Colonic mucosa (tissue), 4 donors: ENCODE measurements at regions of chr4 and their contacts with region 1.

Region 1: DNA sequence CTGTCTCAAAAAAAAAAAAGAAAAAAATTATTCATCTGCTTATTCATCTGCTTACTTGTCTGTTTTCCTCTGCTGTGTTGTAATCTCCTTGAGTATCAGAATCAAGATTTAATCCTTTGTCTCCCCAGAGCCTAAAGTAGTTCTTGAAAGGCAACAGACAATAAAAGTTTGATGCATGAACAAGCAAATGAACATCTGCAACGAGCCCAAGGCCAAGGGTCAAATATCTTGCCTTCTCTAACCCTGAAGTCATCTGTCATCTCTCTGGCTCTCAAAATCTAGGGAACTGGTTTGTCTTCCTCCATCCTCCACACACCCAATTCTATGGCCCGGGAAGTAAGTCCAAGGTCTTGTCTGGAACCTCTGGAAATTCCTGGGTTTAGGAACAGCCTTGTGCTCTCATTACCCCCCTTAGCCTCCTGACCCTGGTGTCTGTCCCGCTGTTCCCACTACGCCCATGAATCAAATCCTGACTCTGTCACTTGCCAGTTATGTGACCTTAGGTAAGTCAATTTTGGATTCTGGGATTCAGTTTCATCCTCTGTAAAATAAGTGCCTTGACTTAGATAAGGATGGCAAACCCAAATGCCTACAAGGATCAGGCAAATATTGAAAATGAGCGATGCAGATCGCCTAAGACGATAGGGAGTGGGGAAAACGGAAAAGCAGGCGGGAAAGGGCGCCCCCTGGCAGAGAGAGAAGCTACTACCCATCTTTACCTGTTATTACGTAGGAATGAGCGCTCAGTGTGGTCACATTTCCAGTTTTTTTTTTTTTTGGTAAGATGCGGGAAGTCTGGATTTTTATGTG is 102.7 kb upstream of the DHX15 start:
- DNase-seq: peak; percentile 54
- H3K4me3 ChIP-seq: no peak overlapping the region
- H3K27ac ChIP-seq: no peak overlapping the region
- H3K4me1 ChIP-seq: no peaks in the 10 kb centered on the region
- H3K27me3 ChIP-seq: no peaks in the 10 kb centered on the region
- CTCF ChIP-seq: peak; percentile 56

Region 2: DNA sequence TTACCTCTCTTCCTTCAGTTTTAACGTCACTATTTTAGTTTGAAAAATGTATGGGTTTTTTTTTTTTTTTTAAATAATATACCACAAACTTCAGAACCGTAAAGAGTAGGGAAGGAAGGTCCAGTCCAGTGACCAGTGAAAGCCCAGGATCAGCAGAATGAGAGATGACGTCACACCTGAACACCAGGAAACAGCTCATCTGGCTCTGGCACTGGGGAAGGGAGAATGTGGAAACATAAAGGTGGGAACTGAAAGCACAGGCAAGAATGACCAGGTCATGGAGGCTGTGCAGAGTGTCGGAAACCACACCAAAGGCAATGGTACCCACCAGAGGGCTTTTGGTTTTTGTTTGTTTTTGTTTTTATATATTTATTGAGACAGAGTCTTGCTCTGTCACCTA is 243.9 kb before region 1 on chr4:
- intact Hi-C with region 1: no loop called
- DNase-seq: no peak
- H3K4me3 ChIP-seq: no peak overlapping the region
- H3K27ac ChIP-seq: no peak overlapping the region
- H3K4me1 ChIP-seq: no peaks in the 10 kb centered on the region
- H3K27me3 ChIP-seq: no peaks in the 10 kb centered on the region
- CTCF ChIP-seq: no peak

Region 3: DNA sequence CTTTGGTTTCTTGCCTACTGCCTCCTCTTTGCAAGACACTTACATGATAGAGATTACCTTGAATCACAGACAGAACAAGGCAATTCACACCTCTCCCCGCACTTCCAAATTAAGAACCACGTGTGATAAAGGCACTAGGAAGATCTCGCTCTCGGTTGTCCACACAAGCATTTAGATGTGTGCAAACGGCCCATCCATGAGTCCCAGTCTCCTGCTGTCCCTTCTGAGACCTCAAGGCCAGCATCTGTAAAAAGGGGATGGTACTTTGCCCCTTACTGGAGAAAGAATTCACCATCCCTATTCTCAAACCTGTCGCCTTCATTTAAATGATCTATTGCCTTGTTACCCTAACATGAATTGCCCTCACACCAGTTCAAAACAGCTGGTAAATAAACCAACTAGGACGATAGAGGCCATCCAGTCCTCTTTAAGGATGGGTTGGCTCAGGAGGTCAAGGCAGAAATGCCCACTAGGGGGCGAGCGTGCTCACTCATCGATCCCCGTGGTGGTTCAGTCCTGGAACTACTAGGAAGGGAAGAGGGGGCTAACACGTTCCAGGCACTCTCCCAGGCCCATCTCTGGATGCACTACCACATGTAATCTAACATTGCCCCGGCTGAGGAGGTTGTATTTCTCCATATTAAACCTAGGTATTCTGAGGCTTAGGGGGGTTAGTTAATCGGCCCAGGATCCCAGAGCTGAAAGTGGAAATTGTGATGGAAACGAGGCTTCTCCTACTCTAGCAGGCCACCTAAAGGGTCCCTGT is 198.5 kb before region 1 on chr4:
- intact Hi-C with region 1: loop called (anchors 2 kb)
- DNase-seq: peak; percentile 82
- H3K4me3 ChIP-seq: no peak overlapping the region
- H3K27ac ChIP-seq: no peak overlapping the region
- H3K4me1 ChIP-seq: no peaks in the 10 kb centered on the region
- H3K27me3 ChIP-seq: no peaks in the 10 kb centered on the region
- CTCF ChIP-seq: peak; percentile 86

Region 4: GRCh38 chr4:24514803-24515202 is 172.3 kb before region 1 on chr4:
- intact Hi-C with region 1: loop called (anchors 10 kb)
- DNase-seq: no peak
- H3K4me3 ChIP-seq: no peak overlapping the region
- H3K27ac ChIP-seq: no peak overlapping the region
- H3K4me1 ChIP-seq: no peaks in the 10 kb centered on the region
- H3K27me3 ChIP-seq: no peaks in the 10 kb centered on the region
- CTCF ChIP-seq: no peak